Caco-2 (cell line): ENCODE measurements at regions of chr1 and their contacts with region 1.

Region 1: DNA sequence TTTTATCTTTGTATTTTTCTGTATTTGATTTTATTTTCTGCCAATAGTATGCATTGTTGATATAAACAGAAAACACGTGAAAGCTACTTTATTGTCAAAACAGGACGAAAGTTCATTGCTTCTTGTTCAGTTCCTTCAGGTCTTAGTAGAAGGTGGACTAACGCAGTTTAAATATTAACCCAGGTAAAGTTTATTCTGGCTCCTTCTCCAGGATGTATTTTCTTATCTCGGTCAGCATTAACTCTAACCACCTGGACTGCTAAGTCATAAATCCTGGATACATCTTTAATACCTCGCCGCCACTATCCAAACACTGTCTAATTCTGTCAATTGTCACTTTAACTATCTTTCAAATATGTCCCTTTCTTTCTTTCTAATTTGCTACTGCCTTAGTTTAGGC is 5.7 kb upstream of the SOAT1 start:
- DNase-seq: peak in 1 of 2 experiments; percentile 62
- H3K4me3 ChIP-seq: no peak overlapping the region
- H3K4me3 Mint-ChIP-seq: peak overlapping the region; percentile 42
- H3K27ac Mint-ChIP-seq: no peak overlapping the region
- H3K4me1 ChIP-seq: peaks cover 38% of the 10 kb centered on the region
- H3K4me1 Mint-ChIP-seq: peaks cover 26% of the 10 kb centered on the region
- H3K27me3 ChIP-seq: no peaks in the 10 kb centered on the region
- H3K27me3 Mint-ChIP-seq: no peaks in the 10 kb centered on the region
- CTCF ChIP-seq: no peak

Region 2: DNA sequence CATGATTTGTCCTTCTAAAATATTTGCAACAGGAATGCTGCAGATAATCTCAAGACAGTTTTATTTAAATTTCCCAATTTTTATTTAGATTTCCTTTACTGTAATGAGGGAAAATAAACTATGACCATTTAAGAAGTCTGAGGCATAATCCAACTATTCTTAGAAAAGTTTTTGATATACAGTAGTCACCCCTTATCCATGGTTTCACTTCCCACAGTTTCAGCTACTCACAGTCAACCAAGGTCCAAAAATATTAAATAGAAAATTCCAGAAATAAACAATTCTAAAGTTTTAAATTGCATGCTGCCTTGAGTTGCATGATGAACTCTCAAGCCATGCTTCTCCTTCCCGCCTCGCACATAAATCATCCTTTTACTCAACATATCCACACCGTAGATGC is 172.8 kb before region 1 on chr1:
- CTCF ChIA-PET with region 1: no interaction called
- POLR2A ChIA-PET with region 1: no interaction called
- intact Hi-C with region 1: no loop called
- DNase-seq: no peak
- H3K4me3 ChIP-seq: no peak overlapping the region
- H3K4me3 Mint-ChIP-seq: no peak overlapping the region
- H3K27ac Mint-ChIP-seq: no peak overlapping the region
- H3K4me1 ChIP-seq: no peaks in the 10 kb centered on the region
- H3K4me1 Mint-ChIP-seq: no peaks in the 10 kb centered on the region
- H3K27me3 ChIP-seq: no peaks in the 10 kb centered on the region
- H3K27me3 Mint-ChIP-seq: no peaks in the 10 kb centered on the region
- CTCF ChIP-seq: no peak

Region 3: DNA sequence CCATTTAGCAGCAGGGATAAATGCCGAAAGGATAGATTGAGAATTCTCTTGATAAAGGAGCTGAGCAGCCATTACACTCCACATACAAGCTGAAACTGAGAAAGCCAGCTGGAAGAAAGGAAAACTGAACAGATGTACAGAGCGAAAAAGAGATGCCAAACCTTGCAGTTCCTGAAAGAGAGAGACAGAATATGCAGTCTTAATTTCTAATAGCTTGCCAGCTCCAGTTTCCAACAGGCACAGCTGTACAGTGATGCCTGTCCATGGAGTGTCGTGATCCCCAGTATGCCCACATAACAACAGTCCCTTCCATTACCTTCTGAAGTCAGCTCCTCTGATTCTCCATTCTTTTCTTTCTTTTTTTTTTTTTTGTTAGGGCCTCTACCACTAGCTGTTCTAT is 81.1 kb before region 1 on chr1:
- CTCF ChIA-PET with region 1: no interaction called
- POLR2A ChIA-PET with region 1: interaction called, 10 read pairs
- intact Hi-C with region 1: no loop called
- DNase-seq: no peak
- H3K4me3 ChIP-seq: no peak overlapping the region
- H3K4me3 Mint-ChIP-seq: no peak overlapping the region
- H3K27ac Mint-ChIP-seq: no peak overlapping the region
- H3K4me1 ChIP-seq: peaks cover 24% of the 10 kb centered on the region
- H3K4me1 Mint-ChIP-seq: peaks cover 28% of the 10 kb centered on the region
- H3K27me3 ChIP-seq: no peaks in the 10 kb centered on the region
- H3K27me3 Mint-ChIP-seq: no peaks in the 10 kb centered on the region
- CTCF ChIP-seq: no peak

Region 4: GRCh38 chr1:179263121-179263520 is 24.8 kb before region 1 on chr1:
- CTCF ChIA-PET with region 1: no interaction called
- POLR2A ChIA-PET with region 1: no interaction called
- intact Hi-C with region 1: loop called (anchors 2 kb)
- DNase-seq: peak in 1 of 2 experiments; percentile 5
- H3K4me3 ChIP-seq: no peak overlapping the region
- H3K4me3 Mint-ChIP-seq: no peak overlapping the region
- H3K27ac Mint-ChIP-seq: no peak overlapping the region
- H3K4me1 ChIP-seq: no peaks in the 10 kb centered on the region
- H3K4me1 Mint-ChIP-seq: peaks cover 6% of the 10 kb centered on the region
- H3K27me3 ChIP-seq: no peaks in the 10 kb centered on the region
- H3K27me3 Mint-ChIP-seq: no peaks in the 10 kb centered on the region
- CTCF ChIP-seq: no peak